ENCODE measurements at regions of chr5 and their contacts with region 1.

Region 1: DNA sequence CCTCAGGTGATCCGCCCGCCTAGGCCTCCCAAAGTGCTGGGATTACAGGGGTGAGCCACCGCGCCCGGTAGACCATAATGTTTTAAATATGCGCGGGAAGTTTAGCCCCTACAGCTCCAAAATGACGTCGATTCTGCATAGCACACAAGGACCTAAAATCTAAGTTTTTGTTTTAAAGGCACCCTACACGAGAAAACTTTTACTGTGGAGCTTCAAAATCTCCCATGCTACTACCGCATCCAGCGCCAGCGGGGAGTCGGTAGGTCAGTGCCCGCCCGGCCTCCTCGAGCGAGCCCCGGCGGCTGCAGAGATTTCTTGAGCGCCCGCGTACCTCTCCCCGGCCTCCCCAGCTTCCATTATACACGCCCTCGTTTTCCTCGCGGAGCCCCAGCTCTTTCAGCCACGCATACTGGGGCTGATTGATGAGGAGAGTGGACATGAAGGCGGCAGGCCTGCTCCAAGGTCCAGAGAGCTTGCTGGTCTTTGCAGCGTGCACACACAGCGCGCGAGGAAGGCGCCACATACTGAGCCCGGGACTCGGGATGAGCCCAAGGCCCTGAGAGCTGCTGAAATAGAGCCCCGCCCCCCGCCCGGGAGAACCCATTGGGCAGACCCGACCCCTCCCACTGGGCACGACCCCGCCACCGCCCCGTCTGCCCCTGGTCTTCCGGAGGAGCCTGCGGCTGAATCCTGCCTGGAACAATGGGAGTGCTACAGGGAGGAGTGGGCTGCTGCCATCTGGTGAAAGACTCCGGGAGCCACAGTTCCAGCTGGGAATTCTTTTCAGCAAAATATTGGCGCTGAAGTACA is at the start of gene ALDH7A1:
- DNase-seq: peak in 25 of 35 experiments; percentile 1 to 47 (median 11)
- ATAC-seq: peak; percentile 70 to 81 (median 78)
- H3K4me3 ChIP-seq: peak within 1 kb of the TSS; percentile 55 to 82
- H3K4me3 Mint-ChIP-seq: peak within 1 kb of the TSS; percentile 81 to 88 (median 83)
- H3K27ac ChIP-seq: no peak within 1 kb of the TSS
- H3K27ac Mint-ChIP-seq: peak within 1 kb of the TSS in 1 of 2 donors; percentile 44
- H3K4me1 ChIP-seq: peaks cover 3 to 16% of the 10 kb centered on the region in 2 experiments
- H3K4me1 Mint-ChIP-seq: peaks cover 10 to 16% (median 13%) of the 10 kb centered on the region in 3 donors
- H3K27me3 ChIP-seq: peaks cover 0 to 27% of the 10 kb centered on the region in 2 experiments
- H3K27me3 Mint-ChIP-seq: peaks cover 0 to 18% of the 10 kb centered on the region in 2 donors
- total RNA-seq, gene ALDH7A1: 1.2 to 3.3 (median 2.1) TPM

Region 2: DNA sequence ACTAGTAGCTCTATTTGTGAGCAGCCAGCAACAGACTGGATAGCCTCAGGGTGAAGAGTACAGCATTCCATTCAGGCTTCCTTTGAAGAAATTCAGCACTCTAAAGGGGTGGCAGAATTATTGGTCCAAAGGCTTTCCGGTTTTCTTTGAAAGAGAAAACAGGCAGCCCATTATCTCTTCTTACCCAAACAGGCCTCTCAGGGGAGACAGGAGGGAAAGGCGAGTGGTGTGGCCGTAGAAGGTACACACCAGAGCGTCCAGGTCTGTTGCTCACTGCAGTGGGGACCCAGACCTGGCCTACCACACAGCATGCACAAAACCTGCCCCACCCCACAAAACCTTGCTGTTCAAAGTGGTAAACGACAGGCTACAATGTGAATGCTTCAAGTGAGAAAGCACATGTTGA is 1931.8 kb before region 1 on chr5:
- CTCF ChIA-PET with region 1: no interaction called
- POLR2A ChIA-PET with region 1: no interaction called
- DNase-seq: no peak
- ATAC-seq: no peak
- H3K4me3 ChIP-seq: no peak overlapping the region
- H3K4me3 Mint-ChIP-seq: no peak overlapping the region
- H3K27ac ChIP-seq: no peak overlapping the region
- H3K27ac Mint-ChIP-seq: no peak overlapping the region
- H3K4me1 ChIP-seq: no peaks in the 10 kb centered on the region
- H3K4me1 Mint-ChIP-seq: peaks cover 0 to 3% (median 0%) of the 10 kb centered on the region in 3 donors
- H3K27me3 ChIP-seq: peaks cover 0 to 2% of the 10 kb centered on the region in 2 experiments
- H3K27me3 Mint-ChIP-seq: peaks cover 4 to 45% of the 10 kb centered on the region in 2 donors

Region 3: DNA sequence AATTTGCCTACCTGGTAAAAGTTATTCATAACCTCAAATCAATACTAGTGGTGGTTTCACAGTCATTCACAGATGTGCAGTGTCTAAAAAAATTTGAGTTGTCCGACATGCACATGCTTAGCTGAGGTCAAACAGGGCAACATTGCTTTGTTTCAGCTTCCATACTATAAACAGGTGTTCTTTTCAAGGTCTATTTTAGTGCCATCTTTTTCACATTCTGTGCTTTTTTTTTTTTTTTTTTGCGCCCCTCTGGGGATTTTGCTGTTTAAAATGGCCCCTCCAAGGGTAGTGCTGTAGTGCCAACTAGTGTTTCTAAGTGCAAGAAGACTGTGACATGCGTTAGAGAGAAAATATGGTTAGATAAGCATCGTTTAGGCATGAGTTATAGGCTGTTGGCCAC is 20.4 kb after region 1 on chr5:
- CTCF ChIA-PET with region 1: no interaction called
- POLR2A ChIA-PET with region 1: no interaction called
- DNase-seq: no peak
- ATAC-seq: no peak
- H3K4me3 ChIP-seq: no peak overlapping the region
- H3K4me3 Mint-ChIP-seq: no peak overlapping the region
- H3K27ac ChIP-seq: no peak overlapping the region
- H3K27ac Mint-ChIP-seq: no peak overlapping the region
- H3K4me1 ChIP-seq: peaks cover 0 to 9% of the 10 kb centered on the region in 2 experiments
- H3K4me1 Mint-ChIP-seq: peaks cover 25 to 29% (median 26%) of the 10 kb centered on the region in 3 donors
- H3K27me3 ChIP-seq: no peaks in the 10 kb centered on the region
- H3K27me3 Mint-ChIP-seq: no peaks in the 10 kb centered on the region

Region 4: DNA sequence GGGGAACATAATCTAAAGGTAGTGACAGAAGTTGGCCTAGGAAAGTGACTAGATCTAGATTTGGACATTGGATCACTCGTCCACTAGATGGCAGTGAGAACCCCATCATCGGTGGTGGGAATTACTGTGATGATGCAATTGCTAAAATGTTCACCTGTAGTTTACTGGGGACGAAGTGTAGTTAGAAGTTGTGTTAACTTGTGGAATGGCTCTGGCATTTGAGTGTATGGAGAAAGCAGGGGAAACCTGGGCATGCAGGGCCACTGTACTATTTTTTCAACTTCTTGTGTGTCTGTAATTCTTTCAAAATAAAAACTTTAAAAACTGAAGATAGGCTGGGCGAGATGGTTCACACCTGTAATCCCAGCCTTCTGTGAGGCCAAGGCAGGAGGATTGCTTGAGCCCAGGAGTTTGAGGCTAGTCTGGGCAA is 81.3 kb after region 1 on chr5:
- CTCF ChIA-PET with region 1: interaction called in 1 of 2 experiments, 11 read pairs
- POLR2A ChIA-PET with region 1: no interaction called
- DNase-seq: peak; percentile 30 to 85 (median 58)
- ATAC-seq: peak; percentile 73 to 94 (median 84)
- H3K4me3 ChIP-seq: no peak overlapping the region
- H3K4me3 Mint-ChIP-seq: no peak overlapping the region
- H3K27ac ChIP-seq: no peak overlapping the region
- H3K27ac Mint-ChIP-seq: no peak overlapping the region
- H3K4me1 ChIP-seq: peaks cover 0 to 3% of the 10 kb centered on the region in 2 experiments
- H3K4me1 Mint-ChIP-seq: peaks cover 3 to 6% (median 3%) of the 10 kb centered on the region in 3 donors
- H3K27me3 ChIP-seq: no peaks in the 10 kb centered on the region
- H3K27me3 Mint-ChIP-seq: no peaks in the 10 kb centered on the region

Region 5: DNA sequence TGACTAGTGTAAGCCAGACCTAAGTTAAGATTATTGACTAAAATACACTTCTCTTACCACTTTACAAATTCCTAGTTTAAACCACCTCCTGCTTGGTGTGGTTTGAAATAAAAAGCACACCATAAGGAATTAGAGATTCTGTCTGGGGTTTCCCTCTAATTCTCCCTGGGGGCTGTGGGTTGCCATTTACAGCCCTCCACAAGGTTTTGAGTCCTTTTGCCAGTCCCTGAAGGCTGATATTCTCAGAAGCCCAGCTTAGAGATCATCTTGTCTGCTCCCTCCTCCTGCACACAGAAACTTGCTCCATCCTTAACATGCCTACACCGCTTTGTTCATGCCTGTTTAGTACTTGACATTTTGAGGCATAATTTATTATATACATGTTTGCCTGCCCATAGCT is 174.8 kb after region 1 on chr5:
- CTCF ChIA-PET with region 1: no interaction called
- POLR2A ChIA-PET with region 1: no interaction called
- DNase-seq: no peak
- ATAC-seq: no peak
- H3K4me3 ChIP-seq: no peak overlapping the region
- H3K4me3 Mint-ChIP-seq: no peak overlapping the region
- H3K27ac ChIP-seq: no peak overlapping the region
- H3K27ac Mint-ChIP-seq: no peak overlapping the region
- H3K4me1 ChIP-seq: no peaks in the 10 kb centered on the region
- H3K4me1 Mint-ChIP-seq: no peaks in the 10 kb centered on the region
- H3K27me3 ChIP-seq: peaks cover 0 to 8% of the 10 kb centered on the region in 2 experiments
- H3K27me3 Mint-ChIP-seq: peaks cover 0 to 4% of the 10 kb centered on the region in 2 donors

Region 6: GRCh38 chr5:126808521-126808988 is 213.7 kb after region 1 on chr5:
- CTCF ChIA-PET with region 1: no interaction called
- POLR2A ChIA-PET with region 1: interaction called in 1 of 2 experiments, 11 read pairs
- DNase-seq: peak in 1 of 35 experiments; percentile 47
- ATAC-seq: no peak
- H3K4me3 ChIP-seq: no peak overlapping the region
- H3K4me3 Mint-ChIP-seq: no peak overlapping the region
- H3K27ac ChIP-seq: no peak overlapping the region
- H3K27ac Mint-ChIP-seq: peak overlapping the region in 1 of 2 donors; percentile 4
- H3K4me1 ChIP-seq: peaks cover 6 to 9% of the 10 kb centered on the region in 2 experiments
- H3K4me1 Mint-ChIP-seq: peaks cover 26 to 38% (median 36%) of the 10 kb centered on the region in 3 donors
- H3K27me3 ChIP-seq: no peaks in the 10 kb centered on the region
- H3K27me3 Mint-ChIP-seq: no peaks in the 10 kb centered on the region

Measured in T-cell (primary cell).